ENCODE measurements at regions of chr1 and their contacts with region 1.

Region 1: DNA sequence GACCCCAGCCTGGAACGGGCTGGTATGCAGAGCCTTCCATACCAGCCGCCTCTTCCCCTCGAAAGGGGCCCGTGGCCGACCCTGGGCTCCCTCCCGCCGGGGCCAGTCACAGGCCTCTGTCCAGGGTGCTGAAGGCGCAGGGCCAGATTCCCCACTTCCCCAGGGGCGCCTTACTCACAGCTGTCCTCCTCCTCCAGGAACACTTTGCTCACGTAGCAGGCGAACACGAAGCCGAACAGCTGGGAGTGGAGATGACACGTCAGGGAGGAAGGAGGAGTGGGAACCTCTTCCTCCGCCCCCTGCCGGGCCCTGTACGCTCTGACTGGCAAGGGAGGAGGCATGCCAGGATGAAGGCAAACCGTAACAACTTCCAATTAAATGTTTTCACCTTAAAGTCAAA is 57.3 kb downstream of the NKAIN1 start:
- ATAC-seq: peak; percentile 35 to 92 (median 66)
- H3K4me3 ChIP-seq: no peak overlapping the region
- H3K27ac ChIP-seq: no peak overlapping the region
- H3K4me1 ChIP-seq: no peaks in the 10 kb centered on the region

Region 2: DNA sequence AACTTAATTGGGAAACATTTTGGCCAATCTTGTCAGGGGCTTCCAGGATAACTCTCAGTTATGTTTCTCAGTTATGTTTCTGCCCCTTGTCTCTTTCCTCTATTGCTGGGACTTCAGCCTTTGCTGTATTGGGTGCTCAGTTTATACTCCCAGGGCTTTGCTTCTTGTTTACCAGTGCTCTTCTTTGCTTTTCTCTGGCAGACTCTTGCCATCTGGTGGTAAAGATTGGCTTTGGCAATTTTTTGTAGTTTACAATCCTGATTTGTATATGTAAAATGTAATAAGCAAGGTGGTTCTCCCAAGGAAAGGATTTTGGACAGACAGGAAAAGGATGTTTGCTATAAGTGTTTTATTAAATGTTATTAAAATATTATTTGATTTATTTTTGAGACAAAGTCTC is 152.7 kb after region 1 on chr1:
- in situ Hi-C with region 1: loop called in 1 of 9 experiments (anchors 25 kb)
- ATAC-seq: peak in 4 of 8 experiments; percentile 47 to 62 (median 58)
- H3K4me3 ChIP-seq: no peak overlapping the region
- H3K27ac ChIP-seq: no peak overlapping the region
- H3K4me1 ChIP-seq: no peaks in the 10 kb centered on the region

Region 3: GRCh38 chr1:31422505-31423319 is 240.4 kb after region 1 on chr1:
- in situ Hi-C with region 1: loop called in 3 of 9 experiments (anchors 25 kb)
- ATAC-seq: peak; percentile 87 to 98 (median 96)
- H3K4me3 ChIP-seq: no peak overlapping the region
- H3K27ac ChIP-seq: peak overlapping the region in 1 of 2 donors; percentile 3
- H3K4me1 ChIP-seq: peaks cover 0 to 14% of the 10 kb centered on the region in 2 donors

Region 4: GRCh38 chr1:31564134-31564989 is 382.0 kb after region 1 on chr1:
- in situ Hi-C with region 1: loop called in 1 of 9 experiments (anchors 25 kb)
- ATAC-seq: peak; percentile 76 to 94 (median 81)
- H3K4me3 ChIP-seq: no peak overlapping the region
- H3K27ac ChIP-seq: no peak overlapping the region
- H3K4me1 ChIP-seq: peaks cover 3 to 4% of the 10 kb centered on the region in 2 donors